ENCODE measurements at regions of chr2 and their contacts with region 1.

Region 1: GRCh38 chr2:163182764-163183354 is 344.3 kb upstream of the KCNH7 start:
- DNase-seq: peak; percentile 36
- H3K4me3 Mint-ChIP-seq: no peak overlapping the region
- H3K27ac Mint-ChIP-seq: no peak overlapping the region
- H3K4me1 Mint-ChIP-seq: peaks cover under 1% of the 10 kb centered on the region
- H3K27me3 Mint-ChIP-seq: no peaks in the 10 kb centered on the region
- CTCF ChIP-seq: peak; percentile 51

Region 2: GRCh38 chr2:162934191-162934590 is 248.7 kb before region 1 on chr2:
- CTCF ChIA-PET with region 1: no interaction called
- POLR2A ChIA-PET with region 1: no interaction called
- intact Hi-C with region 1: no loop called
- DNase-seq: no peak
- H3K4me3 Mint-ChIP-seq: no peak overlapping the region
- H3K27ac Mint-ChIP-seq: no peak overlapping the region
- H3K4me1 Mint-ChIP-seq: no peaks in the 10 kb centered on the region
- H3K27me3 Mint-ChIP-seq: no peaks in the 10 kb centered on the region
- CTCF ChIP-seq: no peak

Region 3: GRCh38 chr2:163132850-163133249 is 50.0 kb before region 1 on chr2:
- CTCF ChIA-PET with region 1: no interaction called
- POLR2A ChIA-PET with region 1: no interaction called
- intact Hi-C with region 1: no loop called
- DNase-seq: peak; percentile 6
- H3K4me3 Mint-ChIP-seq: no peak overlapping the region
- H3K27ac Mint-ChIP-seq: no peak overlapping the region
- H3K4me1 Mint-ChIP-seq: no peaks in the 10 kb centered on the region
- H3K27me3 Mint-ChIP-seq: peaks cover 22% of the 10 kb centered on the region
- CTCF ChIP-seq: peak; percentile 60

Region 4: GRCh38 chr2:163171786-163172531 is 10.9 kb before region 1 on chr2:
- CTCF ChIA-PET with region 1: interaction called, 38 read pairs
- POLR2A ChIA-PET with region 1: interaction called, 3 read pairs
- intact Hi-C with region 1: no loop called
- DNase-seq: peak; percentile 51
- H3K4me3 Mint-ChIP-seq: no peak overlapping the region
- H3K27ac Mint-ChIP-seq: peak overlapping the region; percentile 57
- H3K4me1 Mint-ChIP-seq: peaks cover 14% of the 10 kb centered on the region
- H3K27me3 Mint-ChIP-seq: no peaks in the 10 kb centered on the region
- CTCF ChIP-seq: no peak

Region 5: GRCh38 chr2:163231666-163232065 is 48.8 kb after region 1 on chr2:
- CTCF ChIA-PET with region 1: no interaction called
- POLR2A ChIA-PET with region 1: no interaction called
- intact Hi-C with region 1: no loop called
- DNase-seq: no peak
- H3K4me3 Mint-ChIP-seq: no peak overlapping the region
- H3K27ac Mint-ChIP-seq: no peak overlapping the region
- H3K4me1 Mint-ChIP-seq: no peaks in the 10 kb centered on the region
- H3K27me3 Mint-ChIP-seq: no peaks in the 10 kb centered on the region
- CTCF ChIP-seq: no peak

Region 6: GRCh38 chr2:163246135-163246534 is 63.3 kb after region 1 on chr2:
- CTCF ChIA-PET with region 1: no interaction called
- POLR2A ChIA-PET with region 1: no interaction called
- intact Hi-C with region 1: no loop called
- DNase-seq: no peak
- H3K4me3 Mint-ChIP-seq: no peak overlapping the region
- H3K27ac Mint-ChIP-seq: no peak overlapping the region
- H3K4me1 Mint-ChIP-seq: no peaks in the 10 kb centered on the region
- H3K27me3 Mint-ChIP-seq: no peaks in the 10 kb centered on the region
- CTCF ChIP-seq: no peak

Region 7: GRCh38 chr2:163471947-163472346 is 289.1 kb after region 1 on chr2:
- CTCF ChIA-PET with region 1: interaction called, 10 read pairs
- POLR2A ChIA-PET with region 1: no interaction called
- intact Hi-C with region 1: no loop called
- DNase-seq: peak; percentile 29
- H3K4me3 Mint-ChIP-seq: no peak overlapping the region
- H3K27ac Mint-ChIP-seq: no peak overlapping the region
- H3K4me1 Mint-ChIP-seq: peaks cover 6% of the 10 kb centered on the region
- H3K27me3 Mint-ChIP-seq: no peaks in the 10 kb centered on the region
- CTCF ChIP-seq: peak; percentile 60

Region 8: DNA sequence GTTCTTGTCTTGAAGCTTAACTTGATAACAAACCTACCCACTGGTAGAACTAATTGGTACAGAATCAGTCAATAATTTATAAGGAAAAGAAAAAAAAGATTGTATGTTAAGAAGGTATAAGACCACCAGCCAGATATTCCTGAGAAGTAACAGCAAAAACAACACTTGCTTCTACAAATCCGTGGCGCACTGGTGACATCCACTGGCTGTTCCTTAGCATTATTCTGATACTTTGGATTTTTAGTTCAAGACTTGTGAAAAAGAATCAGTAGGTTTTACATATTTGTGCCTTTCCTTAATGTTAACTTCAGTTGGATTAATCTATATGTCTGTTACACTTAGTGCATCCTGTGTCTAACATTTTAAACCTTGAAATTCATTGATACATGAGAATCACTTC is 1296.6 kb after region 1 on chr2:
- CTCF ChIA-PET with region 1: interaction called, 12 read pairs
- POLR2A ChIA-PET with region 1: no interaction called
- intact Hi-C with region 1: loop called (anchors 1 kb)
- DNase-seq: peak; percentile 42
- H3K4me3 Mint-ChIP-seq: no peak overlapping the region
- H3K27ac Mint-ChIP-seq: no peak overlapping the region
- H3K4me1 Mint-ChIP-seq: no peaks in the 10 kb centered on the region
- H3K27me3 Mint-ChIP-seq: no peaks in the 10 kb centered on the region
- CTCF ChIP-seq: peak; percentile 59

Region 9: DNA sequence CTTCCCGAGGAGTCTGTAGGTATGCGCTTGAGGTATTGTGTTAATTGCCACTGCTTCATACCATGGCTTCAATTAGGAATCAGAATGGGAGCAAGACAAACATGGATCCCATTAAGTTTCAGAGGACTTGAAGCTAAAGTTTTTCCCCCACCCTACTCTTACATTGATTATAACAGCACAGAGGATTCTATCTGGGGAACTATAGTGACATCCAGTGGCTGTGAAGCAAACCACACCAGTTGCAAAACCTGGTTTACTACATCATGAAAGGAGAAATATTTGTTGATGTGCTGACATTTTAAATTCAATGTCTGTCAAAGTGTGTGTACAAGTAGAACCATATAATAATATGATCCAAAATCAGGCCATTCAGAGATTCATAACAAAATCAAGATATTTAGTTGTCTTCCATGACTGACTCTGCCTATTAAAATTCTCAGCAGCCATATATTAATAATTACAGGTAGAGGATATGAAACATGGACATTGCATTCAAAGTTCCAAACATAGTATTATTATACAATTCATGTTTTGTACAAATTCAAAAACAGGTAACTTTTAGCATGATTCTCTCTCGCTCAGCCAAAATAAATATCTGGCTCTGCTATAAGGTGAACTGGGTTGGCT is 1355.5 kb after region 1 on chr2:
- CTCF ChIA-PET with region 1: interaction called, 40 read pairs
- POLR2A ChIA-PET with region 1: interaction called, 3 read pairs
- intact Hi-C with region 1: no loop called
- DNase-seq: peak; percentile 62
- H3K4me3 Mint-ChIP-seq: no peak overlapping the region
- H3K27ac Mint-ChIP-seq: no peak overlapping the region
- H3K4me1 Mint-ChIP-seq: peaks cover 12% of the 10 kb centered on the region
- H3K27me3 Mint-ChIP-seq: no peaks in the 10 kb centered on the region
- CTCF ChIP-seq: peak; percentile 82